MCF 10A (cell line): ENCODE measurements at regions of chr9 and their contacts with region 1.

Region 1: DNA sequence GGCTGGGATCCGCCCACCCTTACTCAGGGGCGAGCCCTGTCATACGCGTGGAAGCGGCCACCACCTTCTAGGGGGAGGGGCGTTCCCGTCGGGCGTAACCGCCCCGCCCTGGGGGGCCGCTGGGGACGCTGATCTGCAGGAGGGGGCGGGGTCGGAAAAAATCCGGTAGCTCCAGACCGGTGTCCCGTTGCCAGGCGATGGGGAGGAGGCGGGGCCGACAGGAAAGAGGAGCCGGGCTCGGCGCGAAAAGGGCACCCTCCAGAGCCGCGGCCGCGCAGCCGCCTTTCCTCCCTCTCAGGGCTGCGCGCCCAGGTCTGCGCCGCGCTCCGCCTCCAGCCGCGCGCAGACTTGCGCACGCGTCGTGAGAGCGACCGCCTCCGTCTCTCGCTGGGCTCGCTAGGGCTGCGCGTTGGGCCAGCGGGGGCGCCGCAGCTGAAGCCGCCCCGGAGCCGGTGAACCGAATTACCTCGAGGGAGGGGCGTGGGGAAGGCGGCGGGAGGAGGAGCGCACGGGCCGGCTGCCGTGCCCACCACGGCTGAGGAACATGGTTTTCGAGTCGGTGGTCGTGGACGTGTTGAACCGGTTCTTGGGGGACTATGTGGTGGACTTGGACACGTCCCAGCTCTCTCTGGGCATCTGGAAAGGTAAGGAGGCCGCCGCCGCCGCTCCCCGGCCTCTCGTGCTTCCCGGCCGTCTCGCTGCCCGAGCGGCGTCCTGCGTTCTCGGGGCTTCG is at the start of gene VPS13A:
- DNase-seq: peak; percentile 91
- H3K4me3 Mint-ChIP-seq: peak within 1 kb of the TSS; percentile 96
- H3K27ac Mint-ChIP-seq: peak within 1 kb of the TSS; percentile 71
- H3K4me1 Mint-ChIP-seq: peaks cover 14% of the 10 kb centered on the region
- H3K27me3 Mint-ChIP-seq: no peaks in the 10 kb centered on the region
- CTCF ChIP-seq: no peak
- total RNA-seq, gene VPS13A: 23.5 and 29.6 TPM in 2 replicates

Region 2: DNA sequence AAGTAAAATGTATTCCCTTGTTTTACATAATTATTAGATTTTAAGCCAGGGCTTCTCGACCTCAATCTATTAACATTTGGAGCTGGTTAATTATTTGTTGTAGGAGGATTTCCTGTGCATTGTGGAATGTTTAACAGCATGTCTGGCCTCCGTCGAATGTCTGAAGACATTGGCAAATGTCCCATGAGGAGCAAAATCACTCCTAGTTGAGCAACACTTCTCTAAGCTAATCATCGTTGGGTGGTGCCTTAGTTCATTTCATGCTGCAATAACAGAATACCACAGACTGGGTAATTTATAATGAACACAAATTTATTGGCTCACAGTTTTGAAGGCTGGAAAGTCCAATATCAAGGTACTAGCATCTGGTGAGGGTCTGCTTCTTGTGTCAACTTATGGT is 13.4 kb before region 1 on chr9:
- CTCF ChIA-PET with region 1: interaction called, 34 read pairs
- POLR2A ChIA-PET with region 1: interaction called, 24 read pairs
- intact Hi-C with region 1: no loop called
- DNase-seq: peak; percentile 81
- H3K4me3 Mint-ChIP-seq: peak overlapping the region; percentile 46
- H3K27ac Mint-ChIP-seq: peak overlapping the region; percentile 84
- H3K4me1 Mint-ChIP-seq: peaks cover 39% of the 10 kb centered on the region
- H3K27me3 Mint-ChIP-seq: no peaks in the 10 kb centered on the region
- CTCF ChIP-seq: no peak

Region 3: DNA sequence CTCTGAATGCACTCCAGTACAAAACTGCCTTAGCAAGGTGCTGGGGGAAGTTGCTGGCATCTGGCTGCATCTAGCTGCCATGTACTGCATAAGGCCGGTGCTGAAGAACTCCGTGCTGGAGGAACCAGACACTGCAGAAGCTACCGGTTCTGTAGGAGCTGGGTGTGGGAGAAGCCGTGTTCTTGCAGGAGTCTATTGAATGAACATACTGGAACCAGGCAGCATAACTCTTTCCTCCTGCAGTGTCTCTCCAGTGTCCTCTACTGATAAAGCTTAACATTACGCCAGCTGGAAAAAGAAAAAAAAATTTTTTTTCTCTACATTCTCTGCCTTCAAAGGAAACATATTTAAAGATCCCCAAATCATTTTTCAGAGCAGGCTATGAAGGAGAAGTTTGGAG is 38.5 kb after region 1 on chr9:
- CTCF ChIA-PET with region 1: interaction called, 12 read pairs
- POLR2A ChIA-PET with region 1: no interaction called
- intact Hi-C with region 1: loop called (anchors 5 kb)
- DNase-seq: no peak
- H3K4me3 Mint-ChIP-seq: no peak overlapping the region
- H3K27ac Mint-ChIP-seq: no peak overlapping the region
- H3K4me1 Mint-ChIP-seq: peaks cover 32% of the 10 kb centered on the region
- H3K27me3 Mint-ChIP-seq: no peaks in the 10 kb centered on the region
- CTCF ChIP-seq: no peak

Region 4: GRCh38 chr9:77271023-77271690 is 93.8 kb after region 1 on chr9:
- CTCF ChIA-PET with region 1: no interaction called
- POLR2A ChIA-PET with region 1: interaction called, 10 read pairs
- intact Hi-C with region 1: no loop called
- DNase-seq: peak; percentile 33
- H3K4me3 Mint-ChIP-seq: no peak overlapping the region
- H3K27ac Mint-ChIP-seq: no peak overlapping the region
- H3K4me1 Mint-ChIP-seq: no peaks in the 10 kb centered on the region
- H3K27me3 Mint-ChIP-seq: no peaks in the 10 kb centered on the region
- CTCF ChIP-seq: no peak

Region 5: GRCh38 chr9:77291714-77292113 is 114.4 kb after region 1 on chr9:
- CTCF ChIA-PET with region 1: no interaction called
- POLR2A ChIA-PET with region 1: no interaction called
- intact Hi-C with region 1: loop called (anchors 5 kb)
- DNase-seq: peak; percentile 65
- H3K4me3 Mint-ChIP-seq: no peak overlapping the region
- H3K27ac Mint-ChIP-seq: peak overlapping the region; percentile 2
- H3K4me1 Mint-ChIP-seq: peaks cover 19% of the 10 kb centered on the region
- H3K27me3 Mint-ChIP-seq: no peaks in the 10 kb centered on the region
- CTCF ChIP-seq: peak; percentile 53

Region 6: GRCh38 chr9:77440057-77440456 is 262.7 kb after region 1 on chr9:
- CTCF ChIA-PET with region 1: no interaction called
- POLR2A ChIA-PET with region 1: no interaction called
- intact Hi-C with region 1: no loop called
- DNase-seq: no peak
- H3K4me3 Mint-ChIP-seq: no peak overlapping the region
- H3K27ac Mint-ChIP-seq: no peak overlapping the region
- H3K4me1 Mint-ChIP-seq: no peaks in the 10 kb centered on the region
- H3K27me3 Mint-ChIP-seq: no peaks in the 10 kb centered on the region
- CTCF ChIP-seq: no peak